Heart right ventricle (tissue), 16 donors: ENCODE measurements at regions of chr18 and their contacts with region 1.

Region 1: DNA sequence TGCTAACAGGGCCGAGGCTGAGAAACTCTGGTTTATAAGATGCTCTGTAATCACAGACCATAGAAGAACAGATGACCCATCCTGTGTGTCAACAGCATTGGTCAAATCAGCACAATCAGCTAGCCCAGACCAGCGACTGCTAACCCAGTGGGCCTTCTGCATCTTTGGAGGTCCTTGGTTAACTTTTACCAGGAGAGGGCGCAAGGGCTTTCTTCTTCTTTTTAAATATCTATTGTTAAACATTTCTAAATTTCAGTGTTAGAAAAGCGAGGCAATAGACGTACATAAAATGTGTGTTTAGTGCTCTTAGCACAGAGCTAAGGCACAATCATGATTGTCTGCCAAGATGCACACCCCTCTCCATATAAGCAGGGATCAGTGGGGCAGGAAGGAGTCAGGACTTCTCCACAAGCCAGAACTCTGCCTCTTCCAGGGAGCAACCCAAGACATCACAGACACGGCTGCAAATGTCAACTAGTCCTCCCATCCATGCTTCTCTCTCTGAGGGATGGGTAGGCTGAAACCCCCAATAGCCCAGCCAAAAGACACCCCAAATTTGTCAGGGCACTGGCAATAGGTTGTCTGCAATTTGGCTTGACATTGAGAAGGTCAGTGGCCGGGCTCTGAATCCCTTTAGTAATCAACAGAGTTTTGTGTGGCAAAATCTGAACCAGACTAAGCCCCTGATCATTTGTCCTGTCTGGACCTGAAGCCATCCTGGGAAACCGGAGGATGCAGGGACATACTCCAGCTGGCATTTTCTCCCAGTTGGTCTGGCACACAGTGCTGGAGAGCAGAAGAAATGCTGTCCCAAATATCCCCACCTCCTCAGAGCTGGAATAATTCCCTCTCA is 188.2 kb downstream of the BCL2 start:
- DNase-seq: peak in 1 of 2 donors; percentile 74
- ATAC-seq: peak; percentile 41 to 80 (median 69)
- H3K4me3 ChIP-seq: no peak overlapping the region
- H3K27ac ChIP-seq: peak overlapping the region in 2 of 10 donors; percentile 9 to 15
- H3K4me1 ChIP-seq: peaks cover 3 to 15% (median 8%) of the 10 kb centered on the region in 9 donors
- H3K27me3 ChIP-seq: no peaks in the 10 kb centered on the region
- CTCF ChIP-seq: peak; percentile 41 to 85 (median 75)

Region 2: DNA sequence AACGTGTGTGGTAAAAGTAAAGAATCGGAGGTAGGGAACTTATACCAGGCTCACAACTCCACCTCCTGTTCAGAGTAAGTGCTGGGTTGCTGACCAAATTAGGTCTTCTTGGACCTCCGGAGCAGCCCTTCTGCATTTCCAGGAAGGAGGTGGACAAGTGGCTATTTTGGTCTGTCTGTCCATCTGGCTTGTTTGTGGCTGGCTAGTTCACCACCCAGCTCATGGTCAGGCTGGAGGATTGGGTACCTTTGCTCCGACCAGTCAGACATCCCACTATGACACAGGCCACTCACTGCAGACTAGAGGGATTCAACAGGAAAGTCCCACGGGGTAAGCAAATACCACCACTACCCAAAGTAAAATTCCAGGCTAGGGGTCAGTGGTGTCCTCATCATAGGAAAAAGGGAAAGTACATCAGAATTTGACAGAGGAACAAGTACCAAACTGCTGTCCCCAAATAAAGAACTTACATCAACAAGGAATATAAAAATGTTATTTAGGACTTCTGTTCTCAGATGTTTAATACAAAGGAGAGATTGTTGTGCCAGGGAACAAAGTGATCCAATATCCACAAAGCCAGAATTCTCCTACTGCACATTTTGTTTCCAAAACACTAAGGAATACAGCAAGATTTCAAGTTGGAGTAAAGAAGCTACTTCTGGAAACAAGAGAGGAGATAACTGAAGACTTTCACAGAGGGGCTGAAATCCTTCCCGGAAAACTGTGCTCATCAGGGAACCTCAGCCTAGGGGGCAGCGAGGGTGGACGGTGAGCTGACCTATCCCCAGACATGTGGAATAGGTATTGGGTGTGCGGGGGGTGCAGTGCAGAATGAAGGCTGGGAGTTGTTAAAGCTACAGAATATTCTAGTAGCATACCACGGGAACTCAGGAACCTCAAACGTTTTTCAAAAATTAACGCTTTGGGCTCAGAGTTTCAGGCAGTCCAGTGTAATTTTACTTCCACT is 131.3 kb after region 1 on chr18:
- intact Hi-C with region 1: loop called in 5 of 10 experiments (anchors 5 to 10 kb)
- DNase-seq: peak in 1 of 2 donors; percentile 41
- ATAC-seq: peak; percentile 50 to 88 (median 81)
- H3K4me3 ChIP-seq: no peak overlapping the region
- H3K27ac ChIP-seq: peak overlapping the region; percentile 3 to 74 (median 47)
- H3K4me1 ChIP-seq: peaks cover 0 to 27% (median 20%) of the 10 kb centered on the region in 9 donors
- H3K27me3 ChIP-seq: no peaks in the 10 kb centered on the region
- CTCF ChIP-seq: peak in 6 of 9 donors; percentile 14 to 55 (median 30)

Region 3: GRCh38 chr18:63267975-63268721 is 136.8 kb after region 1 on chr18:
- intact Hi-C with region 1: loop called in 5 of 10 experiments (anchors 5 to 10 kb)
- DNase-seq: no peak
- ATAC-seq: no peak
- H3K4me3 ChIP-seq: no peak overlapping the region
- H3K27ac ChIP-seq: no peak overlapping the region
- H3K4me1 ChIP-seq: peaks cover 0 to 34% (median 16%) of the 10 kb centered on the region in 9 donors
- H3K27me3 ChIP-seq: no peaks in the 10 kb centered on the region
- CTCF ChIP-seq: no peak

Region 4: GRCh38 chr18:63422087-63422809 is 290.9 kb after region 1 on chr18 and contains the start of gene VPS4B:
- intact Hi-C with region 1: loop called in 2 of 10 experiments (anchors 10 kb)
- DNase-seq: peak; percentile 99 to 100
- ATAC-seq: peak; percentile 99
- H3K4me3 ChIP-seq: peak within 1 kb of the TSS; percentile 65 to 97 (median 86)
- H3K27ac ChIP-seq: peak within 1 kb of the TSS; percentile 92 to 99 (median 94)
- H3K4me1 ChIP-seq: peaks cover 5 to 47% (median 24%) of the 10 kb centered on the region in 9 donors
- H3K27me3 ChIP-seq: no peaks in the 10 kb centered on the region
- CTCF ChIP-seq: no peak
- total RNA-seq, gene VPS4B: 19.7 to 39.6 (median 22.8) TPM

Region 5: DNA sequence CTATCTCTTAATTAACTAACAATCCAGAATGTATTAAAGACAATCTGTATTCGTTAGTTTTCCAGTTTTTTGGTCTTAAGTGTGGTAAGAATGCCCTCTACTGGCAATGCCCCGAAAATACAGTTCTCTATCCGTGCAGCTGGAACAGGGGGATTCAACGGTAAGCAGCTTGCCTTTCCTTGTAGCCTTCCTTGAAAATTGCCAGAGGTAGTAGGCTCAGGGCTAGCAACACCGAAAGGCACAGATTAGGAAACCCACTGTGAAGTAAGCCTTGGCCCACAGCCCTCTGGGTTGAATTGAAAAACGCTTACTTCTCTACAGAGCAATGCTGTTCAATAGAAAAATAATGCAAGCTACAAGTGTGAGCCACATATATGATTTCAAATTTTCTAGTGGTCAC is 308.0 kb after region 1 on chr18:
- intact Hi-C with region 1: loop called in 4 of 10 experiments (anchors 5 to 10 kb)
- DNase-seq: peak in 1 of 2 donors; percentile 52
- ATAC-seq: peak in 7 of 8 donors; percentile 54 to 77 (median 69)
- H3K4me3 ChIP-seq: no peak overlapping the region
- H3K27ac ChIP-seq: no peak overlapping the region
- H3K4me1 ChIP-seq: peaks cover 0 to 16% (median 0%) of the 10 kb centered on the region in 9 donors
- H3K27me3 ChIP-seq: peaks cover 0 to 7% (median 0%) of the 10 kb centered on the region in 7 donors
- CTCF ChIP-seq: peak; percentile 54 to 88 (median 83)